ENCODE measurements at regions of chr4 and their contacts with region 1.

Region 1: GRCh38 chr4:172202480-172203076 is 389.4 kb downstream of the GALNTL6 start:
- DNase-seq: no peak
- H3K4me3 ChIP-seq: no peak overlapping the region
- H3K27ac ChIP-seq: no peak overlapping the region
- H3K4me1 ChIP-seq: no peaks in the 10 kb centered on the region
- H3K27me3 ChIP-seq: no peaks in the 10 kb centered on the region
- CTCF ChIP-seq: peak in 2 of 3 experiments; percentile 59 to 72; a peak in 3 of 4 replicates
- EP300 ChIP-seq: no peak
- POLR2A ChIP-seq: no peak
- RAD21 ChIP-seq: peak; percentile 91 to 92

Region 2: GRCh38 chr4:171847751-171848150 is 354.8 kb before region 1 on chr4:
- CTCF ChIA-PET with region 1: interaction called, 16 read pairs
- POLR2A ChIA-PET with region 1: no interaction called
- DNase-seq: no peak
- H3K4me3 ChIP-seq: no peak overlapping the region
- H3K27ac ChIP-seq: no peak overlapping the region
- H3K4me1 ChIP-seq: 0 out of 7 replicates have a peak, but pooled peaks cover 0 to 2% (median 0%) of the 10 kb centered on the region in 4 experiments
- H3K27me3 ChIP-seq: no peaks in the 10 kb centered on the region
- CTCF ChIP-seq: no peak
- EP300 ChIP-seq: no peak
- POLR2A ChIP-seq: no peak
- RAD21 ChIP-seq: no peak

Measured in H1 (cell line).